ENCODE measurements at regions of chr11 and their contacts with region 1.

Region 1: DNA sequence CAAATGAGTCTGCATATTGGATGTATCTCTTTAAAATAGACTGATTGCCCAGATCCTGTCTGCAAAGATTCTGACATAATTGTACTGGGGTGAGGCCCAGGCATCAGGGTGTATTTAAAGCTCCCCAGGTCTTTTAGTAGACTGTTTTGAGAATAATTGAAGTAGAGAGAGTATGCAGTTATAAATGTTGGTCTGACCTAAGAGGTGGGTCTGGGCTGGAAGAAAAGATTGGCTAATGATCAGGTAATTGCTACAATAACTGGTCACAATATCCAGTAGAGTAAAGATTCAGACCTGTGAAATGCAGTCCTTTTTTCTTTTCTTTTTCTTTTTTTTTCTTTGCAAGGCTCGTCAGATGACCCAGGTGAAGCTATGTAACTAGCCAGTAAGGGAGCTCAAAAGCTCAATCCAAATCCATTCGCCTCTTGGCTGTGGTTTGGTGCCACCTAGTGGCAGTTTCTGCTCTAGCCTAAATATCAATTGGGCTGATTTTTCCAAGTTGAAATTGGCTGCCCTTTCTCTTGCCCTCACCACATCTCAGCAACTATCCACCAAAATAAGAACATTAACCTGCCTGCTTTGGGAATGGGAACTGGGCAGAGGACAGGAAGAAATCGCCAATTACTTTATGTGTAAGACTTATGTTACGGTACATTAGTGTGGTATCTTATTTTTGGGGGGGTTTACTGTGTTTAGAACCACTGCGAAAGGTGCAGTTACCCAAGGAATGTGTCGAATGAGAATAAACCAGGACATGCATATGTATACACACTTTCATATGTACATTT is 45.9 kb downstream of the ZNF143 start:
- DNase-seq: peak; percentile 75
- ATAC-seq: peak; percentile 94
- H3K4me3 ChIP-seq: no peak overlapping the region
- H3K27ac ChIP-seq: no peak overlapping the region
- H3K4me1 ChIP-seq: peaks cover 0 to 5% of the 10 kb centered on the region in 2 experiments; a peak in 1 of 4 replicates
- H3K27me3 ChIP-seq: no peaks in the 10 kb centered on the region
- CTCF ChIP-seq: peak; percentile 83 to 94 (median 88)
- POLR2A ChIP-seq: no peak
- RAD21 ChIP-seq: peak; percentile 96

Region 2: DNA sequence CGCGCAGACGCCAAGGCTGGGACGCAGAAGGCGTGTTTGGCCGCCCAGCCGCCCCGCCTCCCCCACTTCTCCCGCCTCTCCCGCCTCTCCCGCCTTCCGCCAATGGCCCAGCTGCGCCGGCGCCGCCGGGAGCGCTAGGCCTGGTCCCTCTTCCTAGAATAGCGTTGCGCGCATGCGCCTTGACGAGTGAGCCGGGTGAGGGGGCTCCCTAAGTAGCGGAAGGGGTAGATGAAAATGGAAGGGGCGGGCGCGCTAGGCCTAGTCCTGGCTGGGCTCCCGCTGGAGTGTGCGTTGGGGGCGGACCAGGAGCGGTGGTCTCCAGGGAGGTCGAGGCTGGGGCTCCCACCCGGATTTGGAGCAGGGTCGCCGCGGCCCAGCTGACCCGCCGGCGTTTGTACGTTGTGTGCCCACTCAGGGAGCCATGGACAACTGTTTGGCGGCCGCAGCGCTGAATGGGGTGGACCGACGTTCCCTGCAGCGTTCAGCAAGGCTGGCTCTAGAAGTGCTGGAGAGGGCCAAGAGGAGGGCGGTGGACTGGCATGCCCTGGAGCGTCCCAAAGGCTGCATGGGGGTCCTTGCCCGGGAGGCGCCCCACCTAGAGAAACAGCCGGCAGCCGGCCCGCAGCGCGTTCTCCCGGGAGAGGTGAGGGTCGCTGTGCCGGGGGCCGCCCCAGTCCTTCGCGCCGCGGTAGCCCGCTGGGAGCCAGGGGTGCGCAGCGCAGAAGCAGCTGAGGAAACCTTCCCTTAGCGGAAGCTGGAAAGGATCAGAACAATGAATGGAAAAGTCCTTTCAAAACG is 595.5 kb before region 1 on chr11 and contains the start of gene AKIP1:
- CTCF ChIA-PET with region 1: interaction called, 7 read pairs
- POLR2A ChIA-PET with region 1: no interaction called
- RAD21 ChIA-PET with region 1: no interaction called
- intact Hi-C with region 1: loop called (anchors 5 kb)
- DNase-seq: peak; percentile 83
- ATAC-seq: peak; percentile 95
- H3K4me3 ChIP-seq: peak within 1 kb of the TSS; percentile 86 to 91
- H3K27ac ChIP-seq: peak within 1 kb of the TSS; percentile 74
- H3K4me1 ChIP-seq: peaks cover 3 to 14% of the 10 kb centered on the region in 2 experiments
- H3K27me3 ChIP-seq: no peaks in the 10 kb centered on the region
- CTCF ChIP-seq: no peak
- POLR2A ChIP-seq: peak; percentile 30
- RAD21 ChIP-seq: no peak
- total RNA-seq, gene AKIP1: 30.3 TPM

Region 3: DNA sequence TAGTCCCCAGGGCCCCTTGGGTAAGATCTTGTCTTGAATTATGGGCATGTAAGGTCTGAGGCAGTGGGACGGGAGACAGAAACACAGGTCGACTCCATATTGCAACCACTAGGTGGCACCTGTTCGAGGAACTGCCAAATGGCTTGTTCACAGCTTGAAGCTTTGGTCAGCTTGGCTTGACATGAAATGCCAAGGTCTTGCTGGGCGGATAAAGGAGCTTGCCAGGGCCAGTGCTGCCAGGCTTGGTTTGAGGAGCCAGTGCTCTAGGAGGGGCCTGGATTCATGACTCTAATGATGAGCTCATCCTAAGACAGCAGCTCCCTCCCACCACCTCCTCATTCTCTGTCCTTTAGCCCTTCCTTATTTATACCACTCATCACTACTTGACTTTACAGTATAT is 491.0 kb before region 1 on chr11:
- CTCF ChIA-PET with region 1: interaction called, 46 read pairs
- POLR2A ChIA-PET with region 1: no interaction called
- RAD21 ChIA-PET with region 1: interaction called, 5 to 7 read pairs
- intact Hi-C with region 1: loop called (anchors 1 kb)
- DNase-seq: peak; percentile 75
- ATAC-seq: peak; percentile 98
- H3K4me3 ChIP-seq: no peak overlapping the region
- H3K27ac ChIP-seq: no peak overlapping the region
- H3K4me1 ChIP-seq: 0 out of 4 replicates have a peak, but pooled peaks cover 0 to 2% of the 10 kb centered on the region in 2 experiments
- H3K27me3 ChIP-seq: no peaks in the 10 kb centered on the region
- CTCF ChIP-seq: peak; percentile 81 to 85 (median 82)
- POLR2A ChIP-seq: no peak
- RAD21 ChIP-seq: peak; percentile 76

Region 4: DNA sequence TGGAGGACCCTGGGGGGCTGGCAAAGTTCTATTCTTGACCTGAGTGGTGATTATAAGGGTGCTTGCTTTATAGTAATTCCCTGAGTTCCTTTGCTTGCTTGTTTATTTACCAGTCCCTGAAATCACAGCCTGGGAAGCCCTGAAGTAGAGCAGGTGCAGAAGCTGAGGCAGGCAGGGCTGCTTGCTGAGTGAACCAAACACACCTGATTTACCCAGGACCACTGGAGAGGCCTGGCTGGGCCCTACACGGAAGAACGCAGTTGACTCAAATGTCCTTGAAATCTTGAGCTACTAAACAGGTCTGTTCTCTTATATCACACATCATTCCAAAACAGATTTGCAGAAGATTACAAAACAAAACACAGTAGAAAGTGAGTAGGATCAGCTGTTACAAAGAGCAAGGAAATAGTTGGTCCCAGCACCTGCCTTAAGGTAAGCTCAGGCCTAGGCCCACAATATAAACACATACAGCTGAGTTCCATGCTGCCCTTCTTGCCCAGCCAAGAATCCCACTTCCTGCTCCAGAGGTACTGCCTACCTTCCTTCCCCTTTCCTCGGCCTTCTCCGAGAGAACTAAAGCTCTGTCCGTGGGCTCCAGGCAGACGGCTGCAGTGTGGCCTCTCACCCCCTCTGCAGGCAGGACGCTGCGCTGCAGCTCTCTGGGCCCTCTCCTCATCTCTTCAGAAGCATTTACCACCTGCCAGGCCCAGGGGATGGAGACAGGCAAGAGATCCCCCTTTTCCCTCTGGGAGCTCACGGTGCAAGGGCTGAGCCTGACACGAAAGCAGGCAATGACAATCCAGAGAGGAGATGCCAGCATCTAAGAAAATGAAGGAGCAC is 369.2 kb before region 1 on chr11:
- CTCF ChIA-PET with region 1: interaction called, 21 read pairs
- POLR2A ChIA-PET with region 1: no interaction called
- RAD21 ChIA-PET with region 1: no interaction called
- intact Hi-C with region 1: no loop called
- DNase-seq: peak; percentile 36
- ATAC-seq: peak; percentile 90
- H3K4me3 ChIP-seq: no peak overlapping the region
- H3K27ac ChIP-seq: no peak overlapping the region; the same call in 1 of the 2 replicates
- H3K4me1 ChIP-seq: peaks cover 33 to 35% of the 10 kb centered on the region in 2 experiments
- H3K27me3 ChIP-seq: no peaks in the 10 kb centered on the region
- CTCF ChIP-seq: peak; percentile 73 to 97 (median 91)
- POLR2A ChIP-seq: no peak
- RAD21 ChIP-seq: peak; percentile 88

Region 5: DNA sequence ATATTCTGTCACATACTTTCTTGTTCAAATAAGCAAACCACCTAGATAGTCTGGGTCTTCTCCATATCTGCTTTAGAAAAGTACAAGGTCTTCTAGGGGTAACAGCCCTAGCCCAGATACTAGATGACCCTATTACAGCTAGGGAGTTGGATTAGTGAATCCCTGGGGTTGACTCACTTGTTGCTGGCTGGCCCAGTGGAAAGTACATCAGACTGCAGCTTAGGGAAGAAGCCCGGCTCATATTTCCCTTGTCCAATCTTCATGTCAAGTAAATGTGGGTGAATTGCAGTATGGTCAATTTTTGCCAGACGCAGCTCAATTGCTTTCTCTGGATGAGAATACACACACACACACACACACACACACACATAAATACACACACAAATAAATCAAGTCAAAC is 336.2 kb before region 1 on chr11:
- CTCF ChIA-PET with region 1: interaction called, 7 read pairs
- POLR2A ChIA-PET with region 1: no interaction called
- RAD21 ChIA-PET with region 1: interaction called in 1 of 2 experiments, 6 read pairs
- intact Hi-C with region 1: loop called (anchors 2 kb)
- DNase-seq: no peak
- ATAC-seq: no peak
- H3K4me3 ChIP-seq: no peak overlapping the region
- H3K27ac ChIP-seq: no peak overlapping the region
- H3K4me1 ChIP-seq: peaks cover 0 to 17% of the 10 kb centered on the region in 2 experiments; a peak in 2 of 4 replicates
- H3K27me3 ChIP-seq: no peaks in the 10 kb centered on the region
- CTCF ChIP-seq: no peak
- POLR2A ChIP-seq: no peak
- RAD21 ChIP-seq: no peak

Region 6: GRCh38 chr11:9280655-9281301 is 225.9 kb before region 1 on chr11:
- CTCF ChIA-PET with region 1: interaction called, 11 read pairs
- POLR2A ChIA-PET with region 1: no interaction called
- RAD21 ChIA-PET with region 1: interaction called in 1 of 2 experiments, 9 read pairs
- intact Hi-C with region 1: loop called (anchors 5 kb)
- DNase-seq: no peak
- ATAC-seq: no peak
- H3K4me3 ChIP-seq: no peak overlapping the region
- H3K27ac ChIP-seq: no peak overlapping the region
- H3K4me1 ChIP-seq: peaks cover 0 to 5% of the 10 kb centered on the region in 2 experiments; a peak in 2 of 4 replicates
- H3K27me3 ChIP-seq: no peaks in the 10 kb centered on the region
- CTCF ChIP-seq: no peak
- POLR2A ChIP-seq: no peak
- RAD21 ChIP-seq: no peak

Region 7: DNA sequence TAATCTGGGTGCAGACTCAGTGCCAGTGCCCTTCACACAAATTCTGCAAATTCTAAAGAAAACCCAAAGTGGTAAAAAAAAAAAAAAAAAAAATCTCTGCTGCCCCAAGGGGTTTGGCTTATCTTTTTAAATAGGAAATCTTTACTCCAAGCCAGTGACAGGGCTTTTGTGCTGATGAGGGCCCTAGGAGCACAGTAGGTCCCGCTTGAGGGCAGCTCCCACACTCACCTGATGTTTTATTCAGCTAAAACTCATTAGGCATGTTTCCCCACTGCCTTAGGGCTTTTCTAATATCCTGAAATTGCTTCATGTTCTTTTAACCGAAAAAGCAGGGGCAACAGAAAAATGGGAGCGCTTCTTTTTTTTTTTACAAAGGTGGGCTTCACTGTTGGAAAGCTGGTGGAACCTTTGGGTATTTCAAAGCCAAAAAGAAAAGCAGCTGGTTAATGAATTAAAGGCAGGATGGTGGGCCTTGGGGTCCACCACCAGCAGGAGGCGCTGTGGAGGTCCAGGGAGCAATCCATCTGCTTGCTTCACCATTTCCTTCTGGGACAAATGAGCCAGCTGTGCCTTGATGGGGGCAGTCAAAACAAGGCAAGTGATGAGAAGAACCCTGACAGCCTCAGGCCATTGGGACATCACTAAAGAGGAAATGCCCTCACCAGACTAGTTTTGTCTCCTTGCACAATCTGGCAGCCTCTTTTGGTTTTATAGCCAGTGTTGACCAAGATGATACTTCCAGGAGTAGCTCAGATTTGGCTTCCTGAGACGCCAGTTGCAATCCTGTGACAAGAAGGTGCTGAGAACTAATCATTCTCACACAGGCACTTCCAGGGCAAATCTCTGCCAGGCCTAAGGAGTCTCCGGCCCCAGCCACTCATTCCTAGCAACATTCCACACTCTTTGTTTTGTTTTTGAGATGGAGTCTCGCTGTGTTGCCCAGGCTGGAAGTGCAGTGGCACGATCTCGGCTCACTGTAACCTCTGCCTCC is 28.4 kb after region 1 on chr11:
- CTCF ChIA-PET with region 1: interaction called, 13 read pairs
- POLR2A ChIA-PET with region 1: no interaction called
- RAD21 ChIA-PET with region 1: no interaction called
- intact Hi-C with region 1: no loop called
- DNase-seq: peak; percentile 44
- ATAC-seq: peak; percentile 78
- H3K4me3 ChIP-seq: no peak overlapping the region
- H3K27ac ChIP-seq: no peak overlapping the region
- H3K4me1 ChIP-seq: peaks cover 5 to 14% of the 10 kb centered on the region in 2 experiments; a peak in 3 of 4 replicates
- H3K27me3 ChIP-seq: no peaks in the 10 kb centered on the region
- CTCF ChIP-seq: peak; percentile 66 to 96 (median 95)
- POLR2A ChIP-seq: no peak
- RAD21 ChIP-seq: peak; percentile 73

Measured in HCT116 (cell line).